Activated B cell treated with CpG ODN at 0.5 μM for 24 hours (primary cell): ENCODE measurements at regions of chr1 and their contacts with region 1.

Region 1: DNA sequence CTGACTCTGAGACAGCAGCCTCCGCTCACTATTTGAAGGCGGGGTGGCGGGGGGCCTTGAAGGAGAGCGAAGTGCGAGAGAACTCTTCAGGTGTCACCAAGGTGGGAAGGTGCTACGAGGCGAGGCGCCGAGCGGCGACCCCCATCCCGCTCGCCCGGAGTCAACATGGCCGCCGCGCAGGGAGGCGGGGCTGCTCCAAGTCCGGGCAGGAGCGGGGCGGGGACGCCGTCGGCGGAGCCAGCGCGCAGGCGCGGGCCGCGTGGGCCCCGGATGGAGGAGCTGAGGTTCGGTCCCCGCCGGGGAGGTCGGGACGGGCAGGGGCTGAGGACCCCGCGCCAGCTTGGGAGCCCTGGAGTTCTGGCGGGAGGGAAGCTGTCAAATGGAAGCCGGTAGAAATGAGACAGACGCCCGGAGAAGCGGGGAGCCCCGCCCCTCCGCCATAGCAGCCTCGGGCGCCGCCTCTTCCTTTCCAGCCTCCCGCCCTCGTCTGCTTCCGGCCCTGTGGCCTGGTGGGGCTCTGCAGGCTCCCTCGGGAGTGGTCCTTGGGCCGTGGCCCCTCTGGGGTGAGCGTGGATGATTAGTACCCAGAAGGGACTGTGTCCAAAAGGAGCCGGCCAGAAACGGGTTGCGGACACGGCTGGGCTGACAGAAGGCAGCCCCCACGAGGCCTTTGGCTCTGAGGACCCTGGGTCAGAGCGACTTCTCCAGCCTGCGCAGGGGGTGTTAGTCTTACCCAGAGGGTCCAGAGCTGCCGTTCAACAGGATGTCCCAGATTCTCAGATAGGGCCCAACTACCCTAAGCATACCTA is at the start of gene PIGV:
- DNase-seq: peak; percentile 94
- ATAC-seq: peak; percentile 70
- H3K4me3 Mint-ChIP-seq: peak within 1 kb of the TSS; percentile 98
- H3K27ac Mint-ChIP-seq: peak within 1 kb of the TSS; percentile 100
- H3K4me1 Mint-ChIP-seq: peaks cover 51% of the 10 kb centered on the region
- H3K27me3 Mint-ChIP-seq: no peaks in the 10 kb centered on the region
- CTCF ChIP-seq: no peak
- total RNA-seq, gene PIGV: 29.6 and 35.4 TPM in 2 replicates

Region 2: GRCh38 chr1:26472901-26473845 is 314.7 kb before region 1 on chr1:
- CTCF ChIA-PET with region 1: no interaction called
- POLR2A ChIA-PET with region 1: interaction called, 4 read pairs
- intact Hi-C with region 1: loop called (anchors 1 kb)
- DNase-seq: peak; percentile 95
- ATAC-seq: peak; percentile 78
- H3K4me3 Mint-ChIP-seq: peak overlapping the region; percentile 88
- H3K27ac Mint-ChIP-seq: peak overlapping the region; percentile 84
- H3K4me1 Mint-ChIP-seq: peaks cover 58% of the 10 kb centered on the region
- H3K27me3 Mint-ChIP-seq: no peaks in the 10 kb centered on the region
- CTCF ChIP-seq: no peak

Region 3: GRCh38 chr1:26602378-26602959 is 185.4 kb before region 1 on chr1:
- CTCF ChIA-PET with region 1: interaction called, 302 read pairs
- POLR2A ChIA-PET with region 1: interaction called, 73 read pairs
- intact Hi-C with region 1: loop called (anchors 1 kb)
- DNase-seq: no peak
- ATAC-seq: peak; percentile 57
- H3K4me3 Mint-ChIP-seq: no peak overlapping the region
- H3K27ac Mint-ChIP-seq: no peak overlapping the region
- H3K4me1 Mint-ChIP-seq: peaks cover 3% of the 10 kb centered on the region
- H3K27me3 Mint-ChIP-seq: peaks cover 2% of the 10 kb centered on the region
- CTCF ChIP-seq: peak; percentile 83

Region 4: DNA sequence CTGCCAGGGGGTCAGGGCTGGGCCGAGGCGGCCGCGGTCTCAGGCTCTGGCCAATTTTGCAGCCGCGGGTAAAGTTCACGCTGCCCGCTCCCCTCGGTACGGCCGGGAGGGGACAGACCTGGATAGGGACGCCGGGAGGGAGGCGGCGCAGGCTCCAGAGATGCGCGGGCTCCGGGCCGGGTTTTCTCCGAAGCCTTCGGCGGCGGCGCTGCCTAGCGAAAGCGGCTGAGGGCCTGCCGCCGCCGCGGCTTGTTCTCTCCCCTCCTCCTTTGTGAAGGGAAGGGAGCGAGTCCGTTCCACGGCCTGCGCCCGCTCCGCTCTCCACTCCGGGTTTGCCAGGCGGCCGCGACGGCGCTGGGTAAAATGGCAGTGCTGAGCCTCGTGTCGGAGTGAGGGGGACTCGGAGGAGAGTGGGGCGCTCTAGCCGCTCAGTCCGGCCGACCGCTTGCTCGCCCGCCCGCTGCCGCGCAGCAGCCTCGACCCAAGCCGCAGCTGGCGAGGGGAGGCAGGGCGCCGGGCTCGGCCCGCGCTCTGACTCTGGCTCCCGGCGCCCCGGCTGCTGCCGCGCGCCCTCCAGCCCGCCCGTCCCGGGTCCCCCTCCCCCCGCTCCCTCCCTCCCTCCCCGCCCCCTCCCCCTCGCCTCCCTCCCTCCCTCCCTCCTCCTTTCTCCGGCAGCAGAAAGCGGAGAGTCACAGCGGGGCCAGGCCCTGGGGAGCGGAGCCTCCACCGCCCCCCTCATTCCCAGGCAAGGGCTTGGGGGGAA is 92.4 kb before region 1 on chr1 and contains the start of gene ARID1A:
- CTCF ChIA-PET with region 1: interaction called, 73 read pairs
- POLR2A ChIA-PET with region 1: interaction called, 308 read pairs
- intact Hi-C with region 1: loop called (anchors 1 kb)
- DNase-seq: peak; percentile 96
- ATAC-seq: peak; percentile 62
- H3K4me3 Mint-ChIP-seq: peak within 1 kb of the TSS; percentile 92
- H3K27ac Mint-ChIP-seq: peak within 1 kb of the TSS; percentile 93
- H3K4me1 Mint-ChIP-seq: peaks cover 34% of the 10 kb centered on the region
- H3K27me3 Mint-ChIP-seq: no peaks in the 10 kb centered on the region
- CTCF ChIP-seq: no peak
- total RNA-seq, gene ARID1A: 116 and 142 TPM in 2 replicates

Region 5: GRCh38 chr1:26744075-26744959 is 43.6 kb before region 1 on chr1:
- CTCF ChIA-PET with region 1: interaction called, 6 read pairs
- POLR2A ChIA-PET with region 1: interaction called, 52 read pairs
- intact Hi-C with region 1: loop called (anchors 1 kb)
- DNase-seq: peak; percentile 57
- ATAC-seq: peak; percentile 96
- H3K4me3 Mint-ChIP-seq: peak overlapping the region; percentile 79
- H3K27ac Mint-ChIP-seq: peak overlapping the region; percentile 97
- H3K4me1 Mint-ChIP-seq: peaks cover 91% of the 10 kb centered on the region
- H3K27me3 Mint-ChIP-seq: no peaks in the 10 kb centered on the region
- CTCF ChIP-seq: no peak

Region 6: GRCh38 chr1:26820784-26821269 is 32.9 kb after region 1 on chr1:
- CTCF ChIA-PET with region 1: interaction called, 11 read pairs
- POLR2A ChIA-PET with region 1: no interaction called
- intact Hi-C with region 1: no loop called
- DNase-seq: no peak
- ATAC-seq: peak; percentile 100
- H3K4me3 Mint-ChIP-seq: peak overlapping the region; percentile 55
- H3K27ac Mint-ChIP-seq: peak overlapping the region; percentile 81
- H3K4me1 Mint-ChIP-seq: peaks cover 28% of the 10 kb centered on the region
- H3K27me3 Mint-ChIP-seq: peaks cover 3% of the 10 kb centered on the region
- CTCF ChIP-seq: no peak

Region 7: DNA sequence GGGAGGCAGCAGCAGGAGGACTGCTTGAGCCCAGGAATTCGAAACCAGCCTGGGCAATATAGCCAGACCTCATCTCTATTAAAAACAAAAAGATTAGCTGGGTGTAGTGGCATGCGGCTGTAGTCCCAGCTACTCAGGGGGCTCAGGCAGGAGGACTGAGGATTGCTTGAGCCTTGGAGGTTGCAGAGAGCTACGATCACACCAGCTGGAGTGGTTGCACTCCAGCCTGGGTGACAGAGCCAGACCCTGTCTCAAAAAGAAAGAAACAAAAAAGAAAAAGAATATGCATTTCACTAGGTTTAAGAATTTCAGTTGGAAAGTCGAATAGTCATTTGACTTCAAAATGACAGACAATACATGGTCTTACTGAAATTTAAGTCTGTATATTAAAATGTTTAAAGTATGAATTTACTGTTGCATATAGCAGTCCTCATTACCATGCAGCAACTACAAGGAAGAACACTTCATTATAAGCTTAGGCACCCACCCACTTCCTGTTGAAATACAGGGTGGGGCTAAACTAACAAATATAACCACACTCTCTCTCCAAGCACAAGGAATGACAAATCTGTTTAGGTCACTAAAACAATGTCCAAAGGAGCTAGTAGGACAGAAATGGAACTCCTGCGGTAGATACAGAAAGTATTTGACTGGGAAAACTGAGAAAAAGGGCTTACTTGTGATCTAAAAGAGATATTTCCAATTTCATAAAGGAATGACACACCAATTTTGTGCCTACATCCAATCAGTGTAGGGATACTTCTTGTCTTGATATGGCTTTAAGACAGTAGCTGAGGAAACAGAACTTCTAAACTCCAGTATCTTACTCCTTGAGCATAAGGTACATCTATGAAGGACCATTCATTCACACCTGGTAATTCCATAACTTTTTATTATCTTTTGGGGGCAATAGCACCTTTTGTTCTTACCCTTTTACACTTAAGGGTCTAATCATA is 648.6 kb after region 1 on chr1:
- CTCF ChIA-PET with region 1: no interaction called
- POLR2A ChIA-PET with region 1: no interaction called
- intact Hi-C with region 1: no loop called
- DNase-seq: no peak
- ATAC-seq: peak; percentile 49
- H3K4me3 Mint-ChIP-seq: peak overlapping the region; percentile 63
- H3K27ac Mint-ChIP-seq: peak overlapping the region; percentile 91
- H3K4me1 Mint-ChIP-seq: peaks cover 87% of the 10 kb centered on the region
- H3K27me3 Mint-ChIP-seq: no peaks in the 10 kb centered on the region
- CTCF ChIP-seq: no peak